ENCODE measurements at regions of chr13 and their contacts with region 1.

Region 1: GRCh38 chr13:91133941-91134802 is 213.3 kb upstream of the MIR17HG start:
- DNase-seq: peak; percentile 44
- H3K4me3 ChIP-seq: no peak overlapping the region
- H3K27ac ChIP-seq: no peak overlapping the region
- H3K4me1 ChIP-seq: no peaks in the 10 kb centered on the region
- H3K27me3 ChIP-seq: no peaks in the 10 kb centered on the region
- CTCF ChIP-seq: peak; percentile 71

Region 2: DNA sequence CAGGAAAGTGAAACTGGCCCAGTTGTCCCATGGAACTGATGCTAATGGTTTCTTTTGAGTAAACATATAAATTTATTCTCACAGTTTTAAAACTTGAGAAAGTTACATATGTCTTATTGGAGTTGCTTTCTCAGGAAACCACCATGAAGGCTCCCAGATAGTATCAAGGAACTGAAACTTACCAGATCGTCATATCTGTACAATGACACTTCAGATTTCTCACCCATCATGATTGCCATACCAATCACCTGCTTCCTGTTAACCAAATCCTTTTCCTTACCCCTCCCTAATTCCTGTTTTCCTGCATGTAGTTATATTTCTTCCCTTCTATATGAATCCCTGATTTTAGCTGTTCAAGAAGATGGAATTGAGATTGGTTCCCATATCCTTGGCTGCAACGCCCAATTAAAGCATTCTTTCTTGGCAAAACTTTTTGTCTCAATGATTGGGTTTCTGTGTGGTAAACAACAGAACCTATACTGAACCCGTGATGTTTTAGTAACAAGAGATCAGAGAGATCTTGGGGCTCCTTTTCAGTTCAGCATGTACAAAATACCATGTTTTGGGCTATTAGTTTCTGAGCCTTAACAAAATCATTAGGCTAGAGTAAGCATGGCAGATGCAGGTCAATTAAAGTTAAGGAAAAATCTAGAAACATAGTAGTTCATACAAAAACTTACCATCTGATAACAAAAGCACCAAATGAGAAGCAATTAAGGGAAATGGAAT is 568.0 kb before region 1 on chr13:
- intact Hi-C with region 1: no loop called
- DNase-seq: no peak
- H3K4me3 ChIP-seq: no peak overlapping the region
- H3K27ac ChIP-seq: no peak overlapping the region
- H3K4me1 ChIP-seq: no peaks in the 10 kb centered on the region
- H3K27me3 ChIP-seq: no peaks in the 10 kb centered on the region
- CTCF ChIP-seq: no peak

Region 3: DNA sequence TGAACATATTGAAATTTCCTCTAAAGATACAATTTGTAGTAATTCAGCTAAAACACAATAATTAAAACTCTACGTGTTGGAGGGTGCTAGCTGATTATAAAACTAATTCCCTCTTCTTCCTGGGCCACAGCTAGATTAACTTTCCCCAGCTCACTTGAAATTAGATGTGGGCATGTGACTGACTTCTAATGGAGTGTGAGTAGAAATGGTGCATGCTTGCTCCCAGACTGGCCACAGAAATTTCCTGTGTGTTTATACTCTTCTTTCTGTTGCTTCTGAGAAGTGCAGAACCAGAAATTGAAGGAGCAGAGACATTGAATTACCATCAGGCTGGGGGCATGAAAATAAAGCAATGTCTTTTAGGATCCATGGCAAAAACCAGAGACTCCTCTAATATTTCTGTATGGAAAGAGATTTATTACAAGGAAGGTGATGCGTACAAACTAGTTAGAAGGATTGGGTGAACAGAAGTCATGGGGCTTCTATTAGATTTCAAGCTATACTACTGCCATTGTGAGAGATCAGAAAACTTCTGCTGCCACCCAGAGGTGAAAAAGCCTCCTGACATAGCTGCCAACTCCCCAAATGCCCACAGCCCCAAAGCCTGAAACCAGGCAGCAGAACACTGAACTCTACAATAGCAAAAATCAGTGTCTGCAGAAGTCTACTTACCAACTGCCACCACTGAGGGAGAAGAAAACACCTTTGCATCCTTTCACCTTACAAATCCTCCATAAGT is 165.8 kb before region 1 on chr13:
- intact Hi-C with region 1: no loop called
- DNase-seq: no peak
- H3K4me3 ChIP-seq: no peak overlapping the region
- H3K27ac ChIP-seq: no peak overlapping the region
- H3K4me1 ChIP-seq: no peaks in the 10 kb centered on the region
- H3K27me3 ChIP-seq: no peaks in the 10 kb centered on the region
- CTCF ChIP-seq: no peak

Region 4: GRCh38 chr13:91185294-91185863 is 51.2 kb after region 1 on chr13:
- intact Hi-C with region 1: loop called (anchors 5 kb)
- DNase-seq: no peak
- H3K4me3 ChIP-seq: no peak overlapping the region
- H3K27ac ChIP-seq: no peak overlapping the region
- H3K4me1 ChIP-seq: no peaks in the 10 kb centered on the region
- H3K27me3 ChIP-seq: no peaks in the 10 kb centered on the region
- CTCF ChIP-seq: no peak

Region 5: DNA sequence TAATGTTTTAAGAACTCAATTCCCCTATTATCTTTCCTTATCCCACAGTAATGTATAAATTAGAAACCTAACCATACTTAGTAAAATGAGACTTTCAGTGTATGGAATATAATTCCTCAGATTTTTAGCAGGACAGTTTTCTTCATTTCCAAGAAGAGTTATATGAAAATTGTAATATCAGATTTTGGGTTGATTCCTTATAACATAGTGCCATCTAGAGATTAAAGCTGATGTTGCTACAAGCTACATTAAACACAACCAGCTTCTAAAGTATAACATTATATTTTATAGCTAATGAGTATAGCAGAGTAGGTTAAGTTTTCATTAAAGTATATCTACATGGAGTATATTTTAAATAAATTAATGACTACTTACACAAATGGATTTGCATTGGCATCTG is 113.6 kb after region 1 on chr13:
- intact Hi-C with region 1: loop called (anchors 5 kb)
- DNase-seq: no peak
- H3K4me3 ChIP-seq: no peak overlapping the region
- H3K27ac ChIP-seq: no peak overlapping the region
- H3K4me1 ChIP-seq: no peaks in the 10 kb centered on the region
- H3K27me3 ChIP-seq: no peaks in the 10 kb centered on the region
- CTCF ChIP-seq: no peak